Spleen (tissue), 13 donors: ENCODE measurements at regions of chr7 and their contacts with region 1.

Region 1: GRCh38 chr7:25259587-25260243 is 31.4 kb upstream of the NPVF start:
- DNase-seq: no peak
- H3K4me3 ChIP-seq: no peak overlapping the region
- H3K27ac ChIP-seq: no peak overlapping the region
- H3K4me1 ChIP-seq: peaks cover 9 to 29% (median 23%) of the 10 kb centered on the region in 6 donors
- H3K27me3 ChIP-seq: peaks cover 0 to 40% (median 0%) of the 10 kb centered on the region in 7 donors
- CTCF ChIP-seq: peak; percentile 56 to 89 (median 76)
- POLR2A ChIP-seq: no peak

Region 2: GRCh38 chr7:25389489-25390106 is 129.9 kb after region 1 on chr7:
- intact Hi-C with region 1: loop called (anchors 2 kb)
- DNase-seq: no peak
- H3K4me3 ChIP-seq: no peak overlapping the region
- H3K27ac ChIP-seq: no peak overlapping the region
- H3K4me1 ChIP-seq: peaks cover 0 to 4% (median 0%) of the 10 kb centered on the region in 6 donors
- H3K27me3 ChIP-seq: peaks cover 0 to 19% (median 0%) of the 10 kb centered on the region in 7 donors
- CTCF ChIP-seq: peak in 8 of 11 experiments; percentile 18 to 52 (median 41)
- POLR2A ChIP-seq: no peak

Region 3: GRCh38 chr7:25559581-25560367 is 300.1 kb after region 1 on chr7:
- intact Hi-C with region 1: loop called (anchors 5 kb)
- DNase-seq: no peak
- H3K4me3 ChIP-seq: no peak overlapping the region
- H3K27ac ChIP-seq: no peak overlapping the region
- H3K4me1 ChIP-seq: no peaks in the 10 kb centered on the region
- H3K27me3 ChIP-seq: no peaks in the 10 kb centered on the region
- CTCF ChIP-seq: no peak
- POLR2A ChIP-seq: no peak

Region 4: GRCh38 chr7:25574828-25575227 is 315.1 kb after region 1 on chr7:
- intact Hi-C with region 1: loop called (anchors 5 kb)
- DNase-seq: no peak
- H3K4me3 ChIP-seq: no peak overlapping the region
- H3K27ac ChIP-seq: no peak overlapping the region
- H3K4me1 ChIP-seq: no peaks in the 10 kb centered on the region
- H3K27me3 ChIP-seq: no peaks in the 10 kb centered on the region
- CTCF ChIP-seq: no peak
- POLR2A ChIP-seq: no peak

Region 5: GRCh38 chr7:25720427-25720826 is 460.7 kb after region 1 on chr7:
- intact Hi-C with region 1: no loop called
- DNase-seq: no peak
- H3K4me3 ChIP-seq: no peak overlapping the region
- H3K27ac ChIP-seq: no peak overlapping the region
- H3K4me1 ChIP-seq: no peaks in the 10 kb centered on the region
- H3K27me3 ChIP-seq: no peaks in the 10 kb centered on the region
- CTCF ChIP-seq: peak in 5 of 11 experiments; percentile 15 to 39 (median 27)
- POLR2A ChIP-seq: no peak

Region 6: GRCh38 chr7:25758559-25758958 is 498.8 kb after region 1 on chr7:
- intact Hi-C with region 1: no loop called
- DNase-seq: no peak
- H3K4me3 ChIP-seq: no peak overlapping the region
- H3K27ac ChIP-seq: no peak overlapping the region
- H3K4me1 ChIP-seq: no peaks in the 10 kb centered on the region
- H3K27me3 ChIP-seq: peaks cover 0 to 11% (median 0%) of the 10 kb centered on the region in 7 donors
- CTCF ChIP-seq: no peak
- POLR2A ChIP-seq: no peak

Region 7: GRCh38 chr7:25851332-25852210 is 591.9 kb after region 1 on chr7:
- intact Hi-C with region 1: loop called (anchors 10 kb)
- DNase-seq: peak; percentile 87
- H3K4me3 ChIP-seq: peak overlapping the region in 4 of 8 donors; percentile 10 to 59 (median 18)
- H3K27ac ChIP-seq: peak overlapping the region in 2 of 8 donors; percentile 26 to 62
- H3K4me1 ChIP-seq: peaks cover 12 to 40% (median 22%) of the 10 kb centered on the region in 6 donors
- H3K27me3 ChIP-seq: peaks cover 8 to 78% (median 58%) of the 10 kb centered on the region in 7 donors
- CTCF ChIP-seq: peak; percentile 47 to 84 (median 82)
- POLR2A ChIP-seq: no peak

Region 8: GRCh38 chr7:26166684-26167271 is 907.1 kb after region 1 on chr7:
- intact Hi-C with region 1: no loop called
- DNase-seq: no peak
- H3K4me3 ChIP-seq: no peak overlapping the region
- H3K27ac ChIP-seq: peak overlapping the region in 6 of 8 donors; percentile 6 to 76 (median 56)
- H3K4me1 ChIP-seq: peaks cover 7 to 22% (median 15%) of the 10 kb centered on the region in 6 donors
- H3K27me3 ChIP-seq: no peaks in the 10 kb centered on the region
- CTCF ChIP-seq: no peak
- POLR2A ChIP-seq: no peak